GM13976 (cell line): ENCODE measurements at regions of chr12 and their contacts with region 1.

Region 1: GRCh38 chr12:85866986-85867776 is 6.9 kb upstream of the NTS start:
- DNase-seq: peak; percentile 51
- CTCF ChIP-seq: peak; percentile 58

Region 2: DNA sequence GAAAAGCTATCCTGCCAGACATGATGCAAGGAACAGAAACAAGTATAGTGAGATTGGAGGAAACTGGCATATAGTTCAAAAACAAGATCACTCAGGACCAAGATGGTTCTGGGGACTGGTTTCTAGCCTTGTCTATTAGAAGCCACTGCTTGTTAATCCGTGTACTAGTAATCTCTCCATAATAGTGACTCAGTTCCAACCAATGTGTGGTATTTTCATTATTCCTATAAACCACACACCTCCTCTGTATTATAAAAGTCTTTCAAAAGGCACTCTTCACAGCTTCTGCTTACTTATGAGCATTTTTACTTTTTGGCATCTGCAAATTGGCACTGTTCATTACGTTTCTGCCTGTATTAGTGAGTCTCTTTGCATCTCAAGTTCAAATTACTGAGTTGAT is 1094.9 kb before region 1 on chr12:
- in situ Hi-C with region 1: no loop called
- DNase-seq: no peak
- CTCF ChIP-seq: no peak

Region 3: GRCh38 chr12:85484387-85484786 is 382.8 kb before region 1 on chr12:
- in situ Hi-C with region 1: loop called (anchors 25 kb)
- DNase-seq: no peak
- CTCF ChIP-seq: no peak

Region 4: GRCh38 chr12:85575120-85576096 is 291.8 kb before region 1 on chr12:
- in situ Hi-C with region 1: loop called (anchors 10 kb)
- DNase-seq: peak; percentile 42
- CTCF ChIP-seq: peak; percentile 39